HEK293T (cell line): ENCODE measurements at regions of chr6 and their contacts with region 1.

Region 1: GRCh38 chr6:47047479-47048407 is 5.6 kb upstream of the ADGRF1 start:
- DNase-seq: peak; percentile 62

Region 2: DNA sequence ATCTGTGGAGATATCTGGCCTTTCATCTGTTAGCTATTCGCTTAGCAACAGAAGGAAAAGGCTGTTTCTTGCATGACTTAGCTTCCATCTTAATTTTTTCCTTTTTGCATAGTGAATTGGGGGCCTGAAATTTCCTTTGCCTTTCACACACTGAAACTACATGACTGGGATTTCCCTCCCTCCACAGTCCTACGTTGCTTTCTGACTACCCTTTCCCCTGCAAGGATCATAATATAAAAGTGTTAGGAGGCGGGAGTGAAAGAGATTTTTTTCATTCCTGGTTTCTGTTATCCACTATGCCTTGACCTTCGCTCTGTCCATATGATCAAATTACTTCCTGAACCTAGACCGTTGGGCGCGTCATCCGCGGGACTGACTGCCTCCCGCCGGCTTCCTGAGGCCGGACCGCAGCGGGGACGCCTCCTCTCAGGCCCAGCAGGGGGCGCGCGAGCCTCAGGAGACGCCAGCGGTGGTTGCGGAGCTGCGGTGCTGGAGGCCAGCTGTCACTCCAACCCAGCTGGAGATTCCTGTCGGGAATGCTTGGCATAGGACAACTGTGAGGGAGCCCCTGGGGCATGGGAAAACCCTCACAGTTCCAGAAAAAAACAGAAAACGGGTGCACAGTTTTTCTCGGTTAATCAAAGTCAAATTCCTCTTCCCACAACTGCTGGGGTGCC is 198.9 kb before region 1 on chr6:
- CTCF ChIA-PET with region 1: interaction called, 12 read pairs
- POLR2A ChIA-PET with region 1: no interaction called
- DNase-seq: peak; percentile 84

Region 3: DNA sequence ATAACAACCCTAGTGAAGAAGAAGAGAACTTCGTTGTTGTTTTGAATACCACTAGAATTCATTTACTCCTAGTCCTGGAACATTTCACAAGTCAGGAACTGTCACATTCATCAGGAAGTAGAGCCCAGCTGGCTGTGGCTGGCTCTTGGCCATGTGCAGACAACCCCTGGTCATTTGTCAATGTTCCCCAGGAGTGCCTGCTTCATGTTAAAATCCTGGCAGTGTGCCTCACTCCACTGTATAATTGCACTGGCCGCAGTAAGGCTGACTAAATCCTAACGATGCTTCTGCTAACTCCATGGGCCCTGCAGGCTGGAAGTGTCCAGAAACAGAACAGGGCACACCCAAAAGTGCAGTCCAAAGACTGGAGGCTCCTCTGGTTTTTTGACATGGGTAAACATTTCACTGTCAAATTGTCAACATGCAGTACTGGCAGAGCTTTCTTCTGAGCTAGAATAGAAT is 35.9 kb after region 1 on chr6:
- CTCF ChIA-PET with region 1: no interaction called
- POLR2A ChIA-PET with region 1: no interaction called
- DNase-seq: no peak